ENCODE measurements at regions of chr1 and their contacts with region 1.

Region 1: GRCh38 chr1:20661207-20662109 is at the start of gene DDOST:
- DNase-seq: peak; percentile 97
- H3K4me3 ChIP-seq: peak within 1 kb of the TSS; percentile 90 to 98 (median 95)
- H3K27ac ChIP-seq: peak within 1 kb of the TSS; percentile 35
- H3K4me1 ChIP-seq: peaks cover 20% of the 10 kb centered on the region
- H3K27me3 ChIP-seq: no peaks in the 10 kb centered on the region
- CTCF ChIP-seq: peak; percentile 32 to 61
- total RNA-seq, gene DDOST: 181 to 238 TPM

Region 2: GRCh38 chr1:20521960-20522861 is 139.2 kb before region 1 on chr1:
- CTCF ChIA-PET with region 1: no interaction called
- dilution Hi-C with region 1: no loop called
- in situ Hi-C with region 1: no loop called
- intact Hi-C with region 1: loop called (anchors 1 kb)
- DNase-seq: peak; percentile 61
- H3K4me3 ChIP-seq: no peak overlapping the region
- H3K27ac ChIP-seq: no peak overlapping the region
- H3K4me1 ChIP-seq: no peaks in the 10 kb centered on the region
- H3K27me3 ChIP-seq: no peaks in the 10 kb centered on the region
- CTCF ChIP-seq: peak; percentile 94 to 98

Region 3: DNA sequence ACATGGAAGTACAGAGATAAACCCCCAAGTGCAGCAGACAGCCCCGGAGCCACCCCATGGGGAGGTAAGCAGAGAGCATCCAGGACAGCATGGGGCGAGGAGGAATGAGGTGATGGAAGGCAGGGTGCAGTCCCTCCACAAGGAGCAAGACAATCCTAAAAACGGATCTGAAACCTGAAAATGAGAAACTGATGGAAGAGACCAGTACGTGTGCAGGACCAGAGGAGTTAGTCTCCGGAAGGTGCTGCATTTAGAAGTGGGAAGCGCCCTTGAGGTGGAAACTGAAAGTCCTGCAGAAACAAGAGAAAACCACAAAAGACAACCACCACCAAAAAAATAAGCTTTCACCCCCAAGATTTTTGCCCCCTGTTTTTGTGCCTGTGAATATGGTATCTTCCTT is 17.1 kb after region 1 on chr1:
- CTCF ChIA-PET with region 1: no interaction called
- dilution Hi-C with region 1: no loop called
- in situ Hi-C with region 1: no loop called
- intact Hi-C with region 1: no loop called
- DNase-seq: no peak
- H3K4me3 ChIP-seq: no peak overlapping the region
- H3K27ac ChIP-seq: no peak overlapping the region
- H3K4me1 ChIP-seq: no peaks in the 10 kb centered on the region
- H3K27me3 ChIP-seq: no peaks in the 10 kb centered on the region
- CTCF ChIP-seq: no peak

Region 4: DNA sequence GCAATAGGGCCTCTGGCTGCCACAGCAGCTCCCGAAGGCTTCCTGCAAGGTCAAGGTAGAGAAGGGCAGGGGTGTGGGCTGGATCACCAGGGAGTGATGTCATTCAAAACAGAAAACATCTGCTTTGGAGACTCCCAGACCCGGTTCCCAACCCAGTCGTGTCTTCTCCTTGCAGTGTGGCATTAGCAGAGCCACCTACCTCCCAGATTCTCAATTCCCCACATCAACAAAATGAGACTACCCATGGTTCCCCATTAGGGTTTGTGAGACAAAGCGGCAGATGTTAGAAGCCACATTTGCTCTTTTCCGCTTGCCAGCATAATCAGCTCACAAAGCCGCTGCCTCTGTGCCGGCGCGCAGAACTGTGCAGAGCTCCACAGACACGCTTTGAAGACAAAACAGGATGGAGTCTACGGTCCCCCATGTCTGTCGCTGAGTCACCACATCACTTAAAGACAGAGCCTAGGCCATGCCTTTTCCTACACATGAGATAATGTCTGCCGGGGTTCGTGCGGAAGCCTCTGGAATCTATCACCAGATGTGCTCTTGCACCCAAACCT is 43.8 kb after region 1 on chr1:
- CTCF ChIA-PET with region 1: no interaction called
- dilution Hi-C with region 1: no loop called
- in situ Hi-C with region 1: no loop called
- intact Hi-C with region 1: no loop called
- DNase-seq: no peak
- H3K4me3 ChIP-seq: no peak overlapping the region
- H3K27ac ChIP-seq: no peak overlapping the region
- H3K4me1 ChIP-seq: no peaks in the 10 kb centered on the region
- H3K27me3 ChIP-seq: no peaks in the 10 kb centered on the region
- CTCF ChIP-seq: no peak

Region 5: GRCh38 chr1:20732588-20733360 is 71.3 kb after region 1 on chr1 and contains the start of gene SH2D5:
- CTCF ChIA-PET with region 1: interaction called, 5 read pairs
- dilution Hi-C with region 1: no loop called
- in situ Hi-C with region 1: no loop called
- intact Hi-C with region 1: loop called (anchors 1 kb)
- DNase-seq: peak; percentile 98
- H3K4me3 ChIP-seq: peak within 1 kb of the TSS; percentile 43 to 76 (median 61)
- H3K27ac ChIP-seq: peak within 1 kb of the TSS; percentile 80
- H3K4me1 ChIP-seq: peaks cover 54% of the 10 kb centered on the region
- H3K27me3 ChIP-seq: no peaks in the 10 kb centered on the region
- CTCF ChIP-seq: peak in 1 of 2 donors; percentile 37
- total RNA-seq, gene SH2D5: 13.2 to 65.3 TPM

Measured in mammary epithelial cell (primary cell).